Activated naive CD4-positive, alpha-beta T cell treated with anti-CD3 and anti-CD28 coated beads for 36 hours (primary cell): ENCODE measurements at regions of chr3 and their contacts with region 1.

Region 1: DNA sequence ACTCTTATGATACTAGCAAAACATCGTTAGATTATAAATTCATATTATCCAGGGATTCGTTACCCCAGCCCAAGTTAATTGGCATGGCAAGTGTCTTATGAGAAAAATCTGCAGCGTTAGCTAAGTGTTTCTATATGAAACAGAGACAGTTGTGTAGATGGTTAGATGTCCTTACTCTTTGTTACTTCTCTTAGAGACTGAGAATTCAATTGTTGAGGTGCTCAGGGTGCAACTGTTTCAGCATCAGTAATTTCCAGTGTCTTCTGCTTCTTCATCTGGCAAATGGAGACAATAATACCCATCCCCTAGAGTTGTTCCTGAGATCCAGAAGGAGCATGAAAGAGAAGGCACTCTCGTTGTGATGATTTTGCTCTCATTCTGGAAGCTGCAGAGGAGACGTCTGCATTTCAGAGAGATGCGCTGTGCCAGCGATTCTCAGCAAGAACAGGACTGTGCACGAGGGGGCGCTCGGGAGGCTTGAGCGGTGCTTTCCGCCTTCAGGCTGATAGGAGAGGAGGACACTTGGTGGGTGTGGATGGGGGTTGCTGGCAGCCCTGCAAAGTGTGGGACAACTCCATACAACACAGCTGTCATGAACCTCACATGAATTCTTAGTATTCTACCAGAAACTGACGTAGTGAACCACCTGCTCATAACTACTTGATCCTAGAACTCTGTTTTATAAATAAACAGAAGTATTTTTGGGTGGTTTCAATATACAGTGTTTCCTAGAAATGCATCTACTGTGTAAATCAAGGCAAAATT is 39.7 kb upstream of the SPSB4 start:
- DNase-seq: peak; percentile 91
- H3K4me3 Mint-ChIP-seq: no peak overlapping the region
- H3K27ac Mint-ChIP-seq: no peak overlapping the region
- H3K4me1 Mint-ChIP-seq: peaks cover 5% of the 10 kb centered on the region
- H3K27me3 Mint-ChIP-seq: peaks cover 12% of the 10 kb centered on the region

Region 2: GRCh38 chr3:140270329-140270728 is 741.1 kb before region 1 on chr3:
- CTCF ChIA-PET with region 1: no interaction called
- intact Hi-C with region 1: no loop called
- DNase-seq: no peak
- H3K4me3 Mint-ChIP-seq: no peak overlapping the region
- H3K27ac Mint-ChIP-seq: no peak overlapping the region
- H3K4me1 Mint-ChIP-seq: no peaks in the 10 kb centered on the region
- H3K27me3 Mint-ChIP-seq: peaks cover 4% of the 10 kb centered on the region

Region 3: GRCh38 chr3:141000027-141000663 is 11.3 kb before region 1 on chr3:
- CTCF ChIA-PET with region 1: interaction called, 22 read pairs
- intact Hi-C with region 1: loop called (anchors 1 kb)
- DNase-seq: peak; percentile 73
- H3K4me3 Mint-ChIP-seq: no peak overlapping the region
- H3K27ac Mint-ChIP-seq: no peak overlapping the region
- H3K4me1 Mint-ChIP-seq: peaks cover 4% of the 10 kb centered on the region
- H3K27me3 Mint-ChIP-seq: no peaks in the 10 kb centered on the region

Region 4: GRCh38 chr3:141093971-141094654 is 82.7 kb after region 1 on chr3:
- CTCF ChIA-PET with region 1: no interaction called
- intact Hi-C with region 1: no loop called
- DNase-seq: no peak
- H3K4me3 Mint-ChIP-seq: no peak overlapping the region
- H3K27ac Mint-ChIP-seq: no peak overlapping the region
- H3K4me1 Mint-ChIP-seq: no peaks in the 10 kb centered on the region
- H3K27me3 Mint-ChIP-seq: no peaks in the 10 kb centered on the region

Region 5: GRCh38 chr3:141279077-141279967 is 267.9 kb after region 1 on chr3:
- CTCF ChIA-PET with region 1: no interaction called
- intact Hi-C with region 1: loop called (anchors 10 kb)
- DNase-seq: peak; percentile 34
- H3K4me3 Mint-ChIP-seq: no peak overlapping the region
- H3K27ac Mint-ChIP-seq: no peak overlapping the region
- H3K4me1 Mint-ChIP-seq: peaks cover 17% of the 10 kb centered on the region
- H3K27me3 Mint-ChIP-seq: no peaks in the 10 kb centered on the region

Region 6: DNA sequence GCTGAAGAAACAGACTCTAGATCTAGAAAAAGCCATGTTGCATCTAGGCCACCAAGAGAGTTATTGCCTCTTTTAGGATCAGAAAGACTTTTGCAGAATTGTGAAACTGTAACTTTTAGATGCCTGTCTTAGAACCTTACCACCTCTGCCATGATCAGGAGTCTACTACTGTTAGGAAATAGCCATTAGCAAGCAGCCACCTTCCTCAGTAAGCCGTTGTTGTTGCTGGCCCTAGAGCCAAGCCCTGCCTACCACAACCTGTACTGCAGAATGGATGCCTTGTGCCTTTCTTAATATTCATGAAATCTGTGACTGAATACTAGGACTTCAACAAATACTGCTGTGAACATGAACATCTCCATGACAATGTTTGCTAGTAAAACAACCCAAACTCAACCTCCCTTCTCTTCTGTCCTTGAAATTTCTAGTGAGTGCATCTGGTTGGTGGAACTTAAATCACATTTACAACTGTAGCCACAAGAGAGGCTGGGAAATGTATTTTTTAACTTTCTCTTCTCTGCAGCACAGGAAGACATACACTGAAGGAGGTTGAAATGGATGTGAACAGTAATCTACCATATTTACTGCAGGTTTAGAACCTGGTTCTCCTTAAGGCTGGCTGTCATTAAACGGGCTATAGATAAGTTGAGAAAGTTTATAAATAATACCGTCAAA is 496.1 kb after region 1 on chr3:
- CTCF ChIA-PET with region 1: no interaction called
- intact Hi-C with region 1: no loop called
- DNase-seq: no peak
- H3K4me3 Mint-ChIP-seq: no peak overlapping the region
- H3K27ac Mint-ChIP-seq: peak overlapping the region; percentile 16
- H3K4me1 Mint-ChIP-seq: peaks cover 47% of the 10 kb centered on the region
- H3K27me3 Mint-ChIP-seq: no peaks in the 10 kb centered on the region